Endothelial cell of umbilical vein (primary cell): ENCODE measurements at regions of chr10 and their contacts with region 1.

Region 1: GRCh38 chr10:92816091-92816531 is 32.2 kb upstream of the EXOC6 start:
- DNase-seq: peak; percentile 99
- H3K4me3 ChIP-seq: no peak overlapping the region
- H3K27ac ChIP-seq: peak overlapping the region; percentile 81
- H3K4me1 ChIP-seq: peaks cover 63% of the 10 kb centered on the region
- H3K27me3 ChIP-seq: no peaks in the 10 kb centered on the region
- CTCF ChIP-seq: peak in 1 of 2 donors; percentile 29
- POLR2A ChIP-seq: peak; percentile 45

Region 2: DNA sequence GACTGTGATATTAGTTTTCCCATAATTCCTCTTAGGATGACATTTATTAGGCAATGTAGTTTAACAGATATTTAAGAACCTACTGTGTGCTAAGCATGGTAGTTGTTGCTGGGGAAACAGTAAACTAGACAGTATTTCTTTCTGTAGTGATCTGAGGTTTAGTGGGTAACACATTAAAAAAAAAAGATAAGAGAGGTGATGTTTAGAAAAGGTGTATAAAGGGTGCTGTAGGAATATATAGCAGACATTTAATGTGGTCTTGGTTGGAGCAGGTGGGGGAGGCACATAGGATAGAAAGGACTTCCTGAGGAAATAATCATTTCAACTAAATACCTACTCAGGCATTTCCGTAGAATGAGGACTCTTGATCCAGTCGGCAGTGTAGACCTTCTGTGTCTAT is 211.3 kb before region 1 on chr10:
- CTCF ChIA-PET with region 1: no interaction called
- POLR2A ChIA-PET with region 1: no interaction called
- dilution Hi-C with region 1: no loop called
- intact Hi-C with region 1: no loop called
- DNase-seq: no peak
- H3K4me3 ChIP-seq: no peak overlapping the region
- H3K27ac ChIP-seq: no peak overlapping the region
- H3K4me1 ChIP-seq: peaks cover 30% of the 10 kb centered on the region
- H3K27me3 ChIP-seq: no peaks in the 10 kb centered on the region
- CTCF ChIP-seq: no peak
- POLR2A ChIP-seq: no peak

Region 3: GRCh38 chr10:92640110-92640509 is 176.0 kb before region 1 on chr10:
- CTCF ChIA-PET with region 1: no interaction called
- POLR2A ChIA-PET with region 1: no interaction called
- dilution Hi-C with region 1: no loop called
- intact Hi-C with region 1: loop called (anchors 2 kb)
- DNase-seq: peak; percentile 92
- H3K4me3 ChIP-seq: no peak overlapping the region
- H3K27ac ChIP-seq: peak overlapping the region; percentile 48
- H3K4me1 ChIP-seq: peaks cover 18% of the 10 kb centered on the region
- H3K27me3 ChIP-seq: no peaks in the 10 kb centered on the region
- CTCF ChIP-seq: no peak
- POLR2A ChIP-seq: peak; percentile 26

Region 4: GRCh38 chr10:92757066-92757710 is 58.9 kb before region 1 on chr10:
- CTCF ChIA-PET with region 1: interaction called, 6 read pairs
- POLR2A ChIA-PET with region 1: interaction called, 6 read pairs
- dilution Hi-C with region 1: no loop called
- intact Hi-C with region 1: loop called (anchors 1 kb)
- DNase-seq: peak; percentile 93
- H3K4me3 ChIP-seq: peak overlapping the region in 1 of 3 experiments; percentile 41
- H3K27ac ChIP-seq: peak overlapping the region; percentile 98
- H3K4me1 ChIP-seq: peaks cover 46% of the 10 kb centered on the region
- H3K27me3 ChIP-seq: no peaks in the 10 kb centered on the region
- CTCF ChIP-seq: peak in 1 of 2 donors; percentile 18
- POLR2A ChIP-seq: no peak

Region 5: DNA sequence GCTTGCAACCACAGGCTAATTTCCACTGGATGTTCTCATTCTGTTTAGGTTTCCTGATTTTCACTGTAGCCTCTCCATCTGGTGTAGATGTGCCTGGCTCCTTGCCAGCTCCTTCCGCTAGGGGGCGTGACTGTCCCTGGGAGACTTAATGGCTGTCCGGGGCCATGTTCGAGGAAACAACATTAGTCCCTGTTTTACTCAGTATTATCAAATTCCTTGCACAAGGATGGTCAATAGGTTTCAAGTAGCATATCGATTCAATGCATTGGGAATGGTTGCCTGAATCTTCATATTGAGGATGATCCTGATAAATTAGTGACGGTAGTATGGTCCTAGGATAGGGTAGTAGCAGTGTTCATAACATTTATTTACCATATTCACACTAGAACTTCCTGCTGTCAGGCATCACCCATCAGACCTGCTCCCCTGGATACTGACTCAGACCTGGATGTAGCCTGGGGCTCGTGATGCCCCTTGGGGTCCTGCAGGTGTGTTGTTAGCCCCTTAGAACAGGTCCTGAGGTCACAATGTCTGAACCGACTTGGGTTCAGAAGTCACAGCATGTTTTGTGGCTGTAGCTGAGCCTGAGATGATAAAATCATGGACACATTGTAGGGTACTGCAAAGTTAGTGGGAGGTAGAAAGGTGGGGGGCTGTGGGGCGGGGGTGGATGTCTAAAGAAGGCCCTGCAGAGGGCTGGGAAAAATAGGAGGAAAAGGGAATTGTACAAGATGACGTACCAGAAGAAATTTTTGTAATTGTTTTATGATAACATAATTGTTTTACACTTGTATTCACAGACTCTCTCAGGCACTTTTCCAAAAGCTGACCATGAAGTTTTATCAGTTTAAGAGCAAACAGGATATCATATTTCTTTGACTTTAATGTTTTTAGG is 23.3 kb after region 1 on chr10:
- CTCF ChIA-PET with region 1: interaction called, 43 read pairs
- POLR2A ChIA-PET with region 1: no interaction called
- dilution Hi-C with region 1: no loop called
- intact Hi-C with region 1: loop called (anchors 1 kb)
- DNase-seq: peak; percentile 97
- H3K4me3 ChIP-seq: peak overlapping the region in 1 of 3 experiments; percentile 2
- H3K27ac ChIP-seq: peak overlapping the region; percentile 97
- H3K4me1 ChIP-seq: peaks cover 76% of the 10 kb centered on the region
- H3K27me3 ChIP-seq: no peaks in the 10 kb centered on the region
- CTCF ChIP-seq: peak; percentile 26 to 31
- POLR2A ChIP-seq: no peak

Region 6: DNA sequence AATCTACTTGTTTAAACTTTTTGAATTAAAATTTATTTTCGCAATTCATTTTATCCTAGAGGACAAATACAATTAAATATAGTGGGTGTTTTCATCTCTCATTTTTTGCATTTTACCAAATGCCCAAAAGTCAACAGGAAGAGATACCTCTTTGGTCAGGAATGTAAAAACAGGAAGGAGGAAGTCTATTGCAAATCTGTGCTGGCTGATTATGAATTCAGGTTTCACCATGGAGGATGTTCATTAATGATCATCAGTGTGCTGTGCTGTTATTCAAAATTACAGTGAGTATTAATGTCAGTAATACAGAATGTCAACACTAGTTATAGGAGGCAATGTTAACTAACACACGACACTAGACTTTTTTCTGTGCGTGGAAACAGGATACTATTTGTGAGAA is 56.9 kb after region 1 on chr10:
- CTCF ChIA-PET with region 1: no interaction called
- POLR2A ChIA-PET with region 1: no interaction called
- dilution Hi-C with region 1: no loop called
- intact Hi-C with region 1: loop called (anchors 1 kb)
- DNase-seq: peak; percentile 92
- H3K4me3 ChIP-seq: peak overlapping the region in 1 of 3 experiments; percentile 40
- H3K27ac ChIP-seq: peak overlapping the region; percentile 72
- H3K4me1 ChIP-seq: peaks cover 68% of the 10 kb centered on the region
- H3K27me3 ChIP-seq: no peaks in the 10 kb centered on the region
- CTCF ChIP-seq: no peak
- POLR2A ChIP-seq: peak; percentile 62

Region 7: DNA sequence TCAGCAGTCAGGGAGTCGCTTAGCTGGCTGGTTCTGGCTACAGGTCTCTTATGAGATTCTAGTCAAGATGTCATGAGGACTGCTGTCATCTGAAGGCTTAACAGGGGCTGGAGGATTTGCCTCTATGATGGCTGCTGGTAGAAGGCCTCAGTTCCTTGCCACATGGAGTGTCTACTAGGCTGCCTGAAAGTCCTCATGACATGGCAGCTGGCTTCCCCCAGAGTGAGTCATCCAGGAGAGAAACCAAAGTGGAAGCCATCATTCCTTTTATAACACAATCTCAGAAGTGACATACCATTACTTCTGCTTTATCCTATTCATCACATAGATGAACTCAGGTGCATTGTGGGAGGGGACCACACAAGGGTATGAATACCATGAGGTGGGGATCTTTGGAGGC is 107.3 kb after region 1 on chr10:
- CTCF ChIA-PET with region 1: no interaction called
- POLR2A ChIA-PET with region 1: no interaction called
- dilution Hi-C with region 1: no loop called
- intact Hi-C with region 1: no loop called
- DNase-seq: no peak
- H3K4me3 ChIP-seq: no peak overlapping the region
- H3K27ac ChIP-seq: no peak overlapping the region
- H3K4me1 ChIP-seq: no peaks in the 10 kb centered on the region
- H3K27me3 ChIP-seq: no peaks in the 10 kb centered on the region
- CTCF ChIP-seq: no peak
- POLR2A ChIP-seq: no peak